T-cell (primary cell): ENCODE measurements at regions of chr14 and their contacts with region 1.

Region 1: DNA sequence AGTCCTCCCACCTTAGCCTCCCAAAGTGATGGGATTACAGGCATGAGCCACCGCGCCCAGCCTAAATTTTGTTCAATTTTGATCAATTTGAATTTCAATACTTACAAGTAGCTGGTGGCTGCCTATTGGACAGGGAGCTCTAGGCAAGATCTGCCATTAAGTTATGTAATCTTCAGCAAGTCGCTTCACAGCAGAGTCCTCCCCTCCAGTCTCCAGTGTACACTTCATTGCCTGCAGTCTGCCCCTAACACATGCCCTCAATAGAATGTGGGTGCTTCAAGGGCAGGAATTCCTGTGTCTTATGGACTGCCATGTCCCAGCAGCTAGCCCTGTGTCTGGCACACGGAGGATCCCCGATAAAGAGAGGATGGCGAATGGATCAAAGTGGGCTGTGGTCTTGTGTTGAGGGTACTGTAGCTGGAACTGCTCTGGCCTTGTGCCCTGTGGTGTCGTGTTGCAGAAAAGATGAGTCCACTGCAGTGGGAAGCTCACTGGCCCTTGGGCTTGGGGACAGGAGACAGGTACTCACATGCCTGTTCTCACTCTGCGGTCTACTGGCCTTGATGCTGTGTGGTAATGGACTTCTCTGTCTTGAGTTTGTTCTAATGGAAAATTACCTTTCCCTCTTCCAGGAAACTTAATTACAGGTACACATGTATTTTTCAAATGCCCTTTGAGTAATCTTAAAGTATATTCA is 67.6 kb downstream of the TECPR2 start:
- DNase-seq: no peak
- ATAC-seq: no peak
- H3K4me3 ChIP-seq: no peak overlapping the region
- H3K4me3 Mint-ChIP-seq: no peak overlapping the region
- H3K27ac ChIP-seq: no peak overlapping the region
- H3K27ac Mint-ChIP-seq: no peak overlapping the region
- H3K4me1 ChIP-seq: no peaks in the 10 kb centered on the region
- H3K4me1 Mint-ChIP-seq: no peaks in the 10 kb centered on the region
- H3K27me3 ChIP-seq: no peaks in the 10 kb centered on the region
- H3K27me3 Mint-ChIP-seq: no peaks in the 10 kb centered on the region

Region 2: GRCh38 chr14:102187568-102188001 is 242.8 kb before region 1 on chr14:
- CTCF ChIA-PET with region 1: no interaction called
- POLR2A ChIA-PET with region 1: interaction called in 1 of 2 experiments, 11 read pairs
- DNase-seq: no peak
- ATAC-seq: no peak
- H3K4me3 ChIP-seq: no peak overlapping the region
- H3K4me3 Mint-ChIP-seq: no peak overlapping the region
- H3K27ac ChIP-seq: no peak overlapping the region
- H3K27ac Mint-ChIP-seq: no peak overlapping the region
- H3K4me1 ChIP-seq: peaks cover 0 to 13% of the 10 kb centered on the region in 2 experiments
- H3K4me1 Mint-ChIP-seq: peaks cover 48 to 63% (median 62%) of the 10 kb centered on the region in 3 donors
- H3K27me3 ChIP-seq: no peaks in the 10 kb centered on the region
- H3K27me3 Mint-ChIP-seq: no peaks in the 10 kb centered on the region